HepG2 (cell line): ENCODE measurements at regions of chr1 and their contacts with region 1.

Region 1: GRCh38 chr1:63691701-63692425 is 82.0 kb upstream of the ROR1 start:
- DNase-seq: peak; percentile 71
- ATAC-seq: peak; percentile 93
- H3K4me3 ChIP-seq: no peak overlapping the region
- H3K27ac ChIP-seq: no peak overlapping the region
- H3K4me1 ChIP-seq: peaks cover 37% of the 10 kb centered on the region
- H3K27me3 ChIP-seq: no peaks in the 10 kb centered on the region
- CTCF ChIP-seq: peak; percentile 84
- EP300 ChIP-seq: no peak
- POLR2A ChIP-seq: no peak
- RAD21 ChIP-seq: peak; percentile 69

Region 2: DNA sequence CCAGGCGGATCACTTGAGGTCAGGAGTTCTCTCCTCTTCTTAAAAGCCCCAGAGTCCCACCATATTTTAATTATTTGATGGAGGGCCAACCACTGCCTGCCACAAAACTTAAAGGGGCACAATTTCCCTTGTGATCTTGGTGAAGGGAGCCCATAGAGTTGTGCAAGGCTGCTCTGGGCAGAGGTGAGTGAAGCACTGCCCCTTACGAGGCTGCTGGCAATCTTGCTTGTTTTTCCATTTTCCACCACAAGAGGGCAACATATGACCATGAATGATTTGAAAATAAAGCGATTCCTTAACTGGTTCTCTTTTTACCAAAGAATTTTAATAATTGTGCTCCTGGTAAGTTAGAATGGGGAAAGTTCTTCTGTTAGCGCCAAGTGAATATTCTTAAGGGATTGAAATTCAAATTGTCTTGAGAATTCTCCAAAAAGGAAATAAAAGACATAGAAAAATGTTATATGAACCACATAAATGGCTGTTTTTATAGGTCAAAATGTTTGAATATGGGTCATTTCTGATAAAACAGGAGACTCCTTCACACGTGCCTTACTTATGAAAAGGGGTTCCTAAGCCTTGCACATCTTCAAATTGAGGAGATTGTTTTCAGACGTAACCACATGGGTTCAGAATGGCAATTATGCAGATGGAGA is 76.0 kb before region 1 on chr1:
- CTCF ChIA-PET with region 1: interaction called, 3 read pairs
- POLR2A ChIA-PET with region 1: no interaction called
- in situ Hi-C with region 1: no loop called
- intact Hi-C with region 1: loop called (anchors 5 kb)
- DNase-seq: peak; percentile 67
- ATAC-seq: peak; percentile 86
- H3K4me3 ChIP-seq: no peak overlapping the region
- H3K27ac ChIP-seq: no peak overlapping the region
- H3K4me1 ChIP-seq: peaks cover 62% of the 10 kb centered on the region
- H3K27me3 ChIP-seq: no peaks in the 10 kb centered on the region
- CTCF ChIP-seq: peak; percentile 77
- EP300 ChIP-seq: no peak
- POLR2A ChIP-seq: no peak
- RAD21 ChIP-seq: peak; percentile 51; the same call in 1 of the 2 replicates

Region 3: GRCh38 chr1:63674238-63674864 is 17.5 kb before region 1 on chr1:
- CTCF ChIA-PET with region 1: interaction called, 8 read pairs
- POLR2A ChIA-PET with region 1: interaction called, 16 read pairs
- in situ Hi-C with region 1: no loop called
- intact Hi-C with region 1: loop called (anchors 1 kb)
- DNase-seq: peak; percentile 94
- ATAC-seq: peak; percentile 95
- H3K4me3 ChIP-seq: 0 out of 6 replicates have a peak overlapping the region, but pooled peaks of 1 of the 3 experiments have one; percentile 6
- H3K27ac ChIP-seq: peak overlapping the region; percentile 54
- H3K4me1 ChIP-seq: peaks cover 38% of the 10 kb centered on the region
- H3K27me3 ChIP-seq: no peaks in the 10 kb centered on the region
- CTCF ChIP-seq: peak; percentile 96
- EP300 ChIP-seq: no peak; a peak in 1 of 4 replicates
- POLR2A ChIP-seq: no peak
- RAD21 ChIP-seq: peak; percentile 71

Region 4: DNA sequence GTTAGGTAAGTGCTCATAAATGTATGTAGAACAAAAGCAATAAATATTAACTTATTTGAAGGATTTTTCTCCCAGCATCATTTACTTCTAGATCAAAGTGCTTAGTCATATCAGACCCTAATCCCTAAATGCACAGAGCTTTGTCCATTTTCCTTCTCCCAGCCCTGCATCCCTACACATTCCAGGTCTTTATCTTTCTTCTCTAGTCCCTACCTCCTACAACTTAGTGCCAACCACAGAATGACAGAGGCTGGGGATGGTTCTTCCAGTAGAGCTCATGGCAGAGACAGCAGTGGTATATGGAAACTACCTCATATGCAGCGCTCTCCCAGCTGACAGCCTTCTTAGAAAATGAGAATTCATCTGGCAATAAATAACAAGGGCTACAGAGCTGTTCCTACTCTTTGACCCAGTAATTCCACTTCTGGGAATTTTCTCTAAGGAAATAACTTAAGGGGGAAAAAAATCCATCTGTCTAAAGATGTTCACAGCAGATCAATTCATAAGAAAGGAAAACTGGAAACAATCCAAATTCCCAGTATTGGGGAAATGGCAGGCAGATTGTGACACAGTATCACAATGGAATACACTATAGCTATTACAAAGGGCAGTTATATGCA is 19.0 kb after region 1 on chr1:
- CTCF ChIA-PET with region 1: no interaction called
- POLR2A ChIA-PET with region 1: no interaction called
- in situ Hi-C with region 1: no loop called
- intact Hi-C with region 1: no loop called
- DNase-seq: no peak
- ATAC-seq: no peak
- H3K4me3 ChIP-seq: no peak overlapping the region
- H3K27ac ChIP-seq: no peak overlapping the region
- H3K4me1 ChIP-seq: peaks cover 1% of the 10 kb centered on the region
- H3K27me3 ChIP-seq: no peaks in the 10 kb centered on the region; a peak in 1 of 5 replicates
- CTCF ChIP-seq: no peak
- EP300 ChIP-seq: no peak
- POLR2A ChIP-seq: no peak
- RAD21 ChIP-seq: no peak

Region 5: GRCh38 chr1:63868268-63868781 is 176.5 kb after region 1 on chr1:
- CTCF ChIA-PET with region 1: no interaction called
- POLR2A ChIA-PET with region 1: no interaction called
- in situ Hi-C with region 1: no loop called
- intact Hi-C with region 1: loop called (anchors 1 kb)
- DNase-seq: no peak
- ATAC-seq: peak; percentile 75
- H3K4me3 ChIP-seq: no peak overlapping the region
- H3K27ac ChIP-seq: no peak overlapping the region
- H3K4me1 ChIP-seq: no peaks in the 10 kb centered on the region
- H3K27me3 ChIP-seq: no peaks in the 10 kb centered on the region
- CTCF ChIP-seq: no peak; the same call in 1 of the 2 replicates
- EP300 ChIP-seq: no peak
- POLR2A ChIP-seq: no peak
- RAD21 ChIP-seq: no peak

Region 6: DNA sequence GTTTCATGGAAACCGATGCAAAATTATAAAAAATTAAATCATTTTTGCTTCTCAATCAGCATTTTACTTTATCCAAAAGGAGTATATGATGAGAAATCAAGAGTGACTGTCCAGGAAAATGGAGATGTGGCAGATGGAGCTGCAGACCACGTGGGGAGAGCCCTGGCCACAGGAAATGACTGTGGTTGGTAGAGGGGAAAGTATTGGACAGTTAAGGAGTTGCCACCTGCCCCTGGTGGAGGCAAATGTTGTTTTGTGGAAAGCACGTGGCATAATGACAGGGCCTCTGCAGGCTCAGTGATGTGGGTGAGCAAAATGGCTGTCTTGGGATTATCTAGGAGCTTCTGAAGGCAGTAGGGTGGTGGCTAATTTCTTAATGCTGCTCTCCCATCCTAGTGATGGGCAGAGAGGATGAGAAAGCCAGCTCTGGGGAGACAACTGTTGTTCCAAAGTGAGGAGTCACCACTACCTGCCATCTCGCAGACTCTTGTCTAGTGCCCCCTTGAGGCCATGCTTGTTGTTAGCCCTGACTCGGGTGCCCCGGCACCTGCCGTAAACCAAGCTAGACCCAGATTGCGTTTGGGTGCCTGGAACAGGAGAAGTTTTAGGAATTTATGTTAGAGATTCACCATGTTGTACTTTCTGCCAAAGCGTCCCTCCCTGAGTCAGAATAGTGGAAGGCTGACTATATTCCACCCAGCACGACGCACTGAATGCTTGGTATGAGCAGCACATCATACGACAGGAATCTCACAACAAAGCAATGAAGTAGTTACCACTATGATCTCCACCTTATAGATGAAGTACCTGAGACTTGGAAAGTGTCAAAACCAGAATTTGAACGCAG is 225.9 kb after region 1 on chr1:
- CTCF ChIA-PET with region 1: interaction called, 3 read pairs
- POLR2A ChIA-PET with region 1: no interaction called
- in situ Hi-C with region 1: loop called (anchors 25 kb)
- intact Hi-C with region 1: loop called (anchors 1 kb)
- DNase-seq: peak; percentile 4
- ATAC-seq: peak; percentile 51; the same call in 2 of the 3 replicates
- H3K4me3 ChIP-seq: no peak overlapping the region
- H3K27ac ChIP-seq: no peak overlapping the region
- H3K4me1 ChIP-seq: peaks cover 13% of the 10 kb centered on the region
- H3K27me3 ChIP-seq: no peaks in the 10 kb centered on the region
- CTCF ChIP-seq: peak; percentile 48
- EP300 ChIP-seq: no peak
- POLR2A ChIP-seq: no peak
- RAD21 ChIP-seq: no peak